Activated CD8-positive, alpha-beta T cell treated with anti-CD3 and anti-CD28 coated beads for 36 hours (primary cell): ENCODE measurements at regions of chr1 and their contacts with region 1.

Region 1: GRCh38 chr1:8689431-8690252 is 127.8 kb downstream of the RERE start:
- DNase-seq: no peak
- ATAC-seq: no peak
- H3K4me3 Mint-ChIP-seq: no peak overlapping the region
- H3K27ac Mint-ChIP-seq: no peak overlapping the region
- H3K4me1 Mint-ChIP-seq: peaks cover 24% of the 10 kb centered on the region
- H3K27me3 Mint-ChIP-seq: no peaks in the 10 kb centered on the region
- CTCF ChIP-seq: no peak

Region 2: GRCh38 chr1:8671306-8671917 is 18.2 kb before region 1 on chr1:
- CTCF ChIA-PET with region 1: interaction called, 10 read pairs
- POLR2A ChIA-PET with region 1: interaction called, 6 read pairs
- intact Hi-C with region 1: no loop called
- DNase-seq: peak; percentile 18
- ATAC-seq: no peak
- H3K4me3 Mint-ChIP-seq: no peak overlapping the region
- H3K27ac Mint-ChIP-seq: no peak overlapping the region
- H3K4me1 Mint-ChIP-seq: peaks cover 44% of the 10 kb centered on the region
- H3K27me3 Mint-ChIP-seq: no peaks in the 10 kb centered on the region
- CTCF ChIP-seq: peak; percentile 81